ENCODE measurements at regions of chr16 and their contacts with region 1.

Region 1: DNA sequence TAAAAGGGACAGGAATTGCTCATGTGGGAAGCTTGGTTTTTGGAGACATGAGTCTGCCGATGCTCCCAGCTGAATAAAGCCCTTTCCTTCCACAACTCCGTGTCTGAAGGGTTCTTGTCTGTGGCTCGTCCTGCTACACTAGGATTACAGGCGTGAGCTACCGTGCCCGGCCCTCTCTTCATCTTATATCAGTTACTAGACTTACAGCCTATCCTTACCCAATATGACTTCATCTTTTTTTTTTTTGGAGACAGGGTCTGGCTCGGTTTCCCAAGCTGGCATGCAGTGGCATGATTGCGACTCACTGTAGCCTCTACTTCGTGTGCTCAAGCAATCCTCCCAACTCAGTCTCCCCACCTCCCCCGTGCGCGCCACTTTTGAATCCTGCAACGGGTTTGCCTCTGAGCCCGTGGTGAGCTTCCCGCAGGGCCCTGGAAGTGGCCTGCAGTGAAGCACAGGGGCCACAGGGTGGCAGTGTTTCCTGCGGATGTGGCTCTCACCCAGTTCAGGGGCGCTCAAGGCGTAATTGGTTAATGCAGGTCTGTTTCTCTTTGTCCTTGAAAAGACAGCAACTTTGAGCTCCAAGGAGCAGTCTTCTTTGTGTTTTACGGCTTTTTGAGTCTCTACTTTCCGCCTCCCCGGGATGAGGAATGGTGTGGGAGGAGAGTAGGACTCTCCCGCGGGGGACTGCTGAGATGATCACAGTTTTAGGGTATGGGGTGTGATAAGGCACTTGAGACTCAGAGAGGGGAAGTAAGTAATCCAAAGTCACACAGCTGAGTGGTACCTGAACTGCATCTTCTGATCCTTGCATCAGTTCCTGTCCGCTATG is 22.7 kb upstream of the GPRC5B start:
- DNase-seq: peak; percentile 72
- CTCF ChIP-seq: peak; percentile 98

Region 2: GRCh38 chr16:20300312-20301097 is 393.1 kb after region 1 on chr16:
- in situ Hi-C with region 1: loop called (anchors 10 kb)
- DNase-seq: peak; percentile 67
- CTCF ChIP-seq: peak; percentile 90

Region 3: GRCh38 chr16:20383106-20384029 is 476.0 kb after region 1 on chr16:
- in situ Hi-C with region 1: loop called (anchors 10 kb)
- DNase-seq: peak; percentile 63
- CTCF ChIP-seq: peak; percentile 82

Region 4: DNA sequence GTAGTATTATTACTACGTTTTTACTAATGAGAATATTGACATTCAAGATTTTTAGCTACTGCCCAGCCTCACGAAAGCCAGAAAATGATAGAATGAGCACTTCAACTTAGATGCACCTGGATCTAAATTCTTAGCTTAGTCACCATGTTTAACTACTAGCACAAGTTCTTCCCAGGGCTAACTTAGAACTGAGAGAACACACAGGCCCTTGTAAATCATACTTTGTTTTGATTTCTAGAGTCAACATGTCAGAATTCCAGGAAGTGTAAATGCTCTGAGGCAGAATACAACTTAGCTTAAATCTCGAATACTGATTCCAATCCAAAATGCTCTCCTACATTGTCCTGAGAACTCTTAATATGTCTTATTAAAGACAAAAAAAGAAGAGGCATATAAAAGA is 796.9 kb after region 1 on chr16:
- in situ Hi-C with region 1: loop called (anchors 25 kb)
- DNase-seq: no peak
- CTCF ChIP-seq: no peak